ENCODE measurements at regions of chr7 and their contacts with region 1.

Region 1: DNA sequence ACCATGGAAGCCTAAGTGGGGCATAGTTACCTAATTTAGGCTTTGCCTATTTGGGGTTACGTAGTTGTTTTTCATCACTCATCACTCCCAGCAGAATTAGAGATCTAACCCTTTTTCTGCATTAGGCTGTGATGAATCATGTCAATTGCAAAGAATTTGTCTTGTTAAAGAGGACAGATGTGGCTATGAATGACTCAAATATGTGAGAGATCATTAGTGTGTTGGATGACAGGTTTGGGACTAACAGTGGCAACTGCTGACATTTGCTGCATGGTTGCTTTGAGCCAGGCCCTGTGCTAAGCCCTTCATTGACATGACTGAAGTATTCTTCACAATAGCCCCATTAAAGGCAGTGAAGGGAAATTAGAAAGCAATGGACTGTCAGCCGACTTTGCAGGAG is 83.4 kb upstream of the BMPER start:
- DNase-seq: no peak
- ATAC-seq: no peak
- H3K4me3 ChIP-seq: no peak overlapping the region
- H3K27ac ChIP-seq: no peak overlapping the region
- H3K4me1 ChIP-seq: no peaks in the 10 kb centered on the region
- CTCF ChIP-seq: no peak
- EP300 ChIP-seq: no peak
- POLR2A ChIP-seq: no peak
- RAD21 ChIP-seq: no peak

Region 2: GRCh38 chr7:33807779-33808482 is 14.0 kb before region 1 on chr7:
- CTCF ChIA-PET with region 1: interaction called, 16 read pairs
- POLR2A ChIA-PET with region 1: no interaction called
- DNase-seq: peak; percentile 18 to 62
- ATAC-seq: peak; percentile 78 to 82
- H3K4me3 ChIP-seq: no peak overlapping the region
- H3K27ac ChIP-seq: peak overlapping the region; percentile 39 to 49; a peak in 5 of 6 replicates
- H3K4me1 ChIP-seq: peaks cover 28% of the 10 kb centered on the region
- CTCF ChIP-seq: peak; percentile 45; the same call in 2 of the 3 replicates
- EP300 ChIP-seq: no peak
- POLR2A ChIP-seq: no peak
- RAD21 ChIP-seq: peak; percentile 47 to 55

Region 3: GRCh38 chr7:33940503-33940902 is 118.5 kb after region 1 on chr7:
- CTCF ChIA-PET with region 1: no interaction called
- POLR2A ChIA-PET with region 1: no interaction called
- DNase-seq: no peak
- ATAC-seq: no peak
- H3K4me3 ChIP-seq: no peak overlapping the region
- H3K27ac ChIP-seq: 0 out of 6 replicates have a peak overlapping the region, but pooled peaks of 1 of the 2 experiments have one; percentile 47
- H3K4me1 ChIP-seq: no peaks in the 10 kb centered on the region
- CTCF ChIP-seq: no peak
- EP300 ChIP-seq: no peak
- POLR2A ChIP-seq: no peak
- RAD21 ChIP-seq: no peak

Measured in A549 (cell line).